ENCODE measurements at regions of chr14 and their contacts with region 1.

Region 1: DNA sequence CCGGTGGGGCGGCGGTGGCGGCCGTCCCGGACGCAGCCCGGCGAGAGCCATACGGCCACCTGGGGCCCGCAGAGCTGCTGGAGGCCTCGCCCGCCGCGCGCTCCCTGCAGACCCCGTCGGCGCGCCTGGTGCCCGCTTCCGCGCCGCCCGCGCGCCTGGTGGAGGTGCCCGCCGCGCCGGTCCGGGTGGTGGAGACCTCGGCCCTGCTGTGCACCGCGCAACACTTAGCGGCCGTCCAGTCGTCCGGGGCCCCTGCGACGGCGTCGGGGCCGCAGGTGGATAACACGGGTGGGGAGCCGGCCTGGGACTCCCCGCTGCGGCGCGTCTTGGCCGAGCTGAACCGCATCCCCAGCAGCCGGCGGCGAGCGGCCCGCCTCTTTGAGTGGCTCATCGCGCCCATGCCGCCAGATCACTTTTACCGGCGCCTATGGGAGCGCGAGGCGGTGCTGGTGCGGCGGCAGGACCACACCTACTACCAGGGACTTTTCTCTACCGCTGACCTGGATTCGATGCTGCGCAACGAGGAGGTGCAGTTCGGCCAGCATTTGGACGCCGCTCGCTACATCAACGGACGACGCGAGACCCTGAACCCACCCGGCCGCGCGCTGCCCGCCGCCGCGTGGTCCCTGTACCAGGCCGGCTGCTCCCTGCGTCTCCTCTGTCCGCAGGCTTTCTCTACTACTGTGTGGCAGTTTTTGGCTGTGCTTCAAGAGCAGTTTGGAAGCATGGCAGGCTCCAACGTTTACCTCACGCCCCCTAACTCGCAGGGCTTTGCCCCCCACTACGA is 716 bp downstream of the RIOX1 start:
- DNase-seq: peak; percentile 69 to 84 (median 74)
- H3K4me3 ChIP-seq: peak overlapping the region; percentile 81 to 96
- H3K4me3 Mint-ChIP-seq: peak overlapping the region; percentile 87 to 94 (median 89)
- H3K27ac ChIP-seq: peak overlapping the region; percentile 83
- H3K27ac Mint-ChIP-seq: peak overlapping the region; percentile 86 to 96 (median 92)
- H3K4me1 ChIP-seq: peaks cover 45% of the 10 kb centered on the region
- H3K4me1 Mint-ChIP-seq: peaks cover 31 to 58% (median 44%) of the 10 kb centered on the region in 4 donors
- H3K27me3 ChIP-seq: no peaks in the 10 kb centered on the region
- H3K27me3 Mint-ChIP-seq: peaks cover 0 to 2% of the 10 kb centered on the region in 2 donors

Region 2: GRCh38 chr14:73463411-73463810 is 28.0 kb before region 1 on chr14:
- CTCF ChIA-PET with region 1: interaction called, 5 read pairs
- POLR2A ChIA-PET with region 1: interaction called, 45 read pairs
- intact Hi-C with region 1: loop called (anchors 1 kb)
- DNase-seq: no peak
- H3K4me3 ChIP-seq: no peak overlapping the region
- H3K4me3 Mint-ChIP-seq: no peak overlapping the region
- H3K27ac ChIP-seq: no peak overlapping the region
- H3K27ac Mint-ChIP-seq: no peak overlapping the region
- H3K4me1 ChIP-seq: peaks cover 36% of the 10 kb centered on the region
- H3K4me1 Mint-ChIP-seq: peaks cover 23 to 50% (median 32%) of the 10 kb centered on the region in 4 donors
- H3K27me3 ChIP-seq: no peaks in the 10 kb centered on the region
- H3K27me3 Mint-ChIP-seq: no peaks in the 10 kb centered on the region

Region 3: GRCh38 chr14:73568381-73568781 is 76.9 kb after region 1 on chr14:
- CTCF ChIA-PET with region 1: interaction called, 10 read pairs
- POLR2A ChIA-PET with region 1: interaction called, 48 read pairs
- intact Hi-C with region 1: loop called (anchors 1 kb)
- DNase-seq: peak in 3 of 5 donors; percentile 3 to 55 (median 6)
- H3K4me3 ChIP-seq: peak overlapping the region; percentile 28 to 63
- H3K4me3 Mint-ChIP-seq: peak overlapping the region; percentile 81 to 96 (median 94)
- H3K27ac ChIP-seq: peak overlapping the region; percentile 72
- H3K27ac Mint-ChIP-seq: peak overlapping the region; percentile 91 to 98 (median 95)
- H3K4me1 ChIP-seq: peaks cover 46% of the 10 kb centered on the region
- H3K4me1 Mint-ChIP-seq: peaks cover 27 to 55% (median 42%) of the 10 kb centered on the region in 4 donors
- H3K27me3 ChIP-seq: no peaks in the 10 kb centered on the region
- H3K27me3 Mint-ChIP-seq: no peaks in the 10 kb centered on the region

Region 4: DNA sequence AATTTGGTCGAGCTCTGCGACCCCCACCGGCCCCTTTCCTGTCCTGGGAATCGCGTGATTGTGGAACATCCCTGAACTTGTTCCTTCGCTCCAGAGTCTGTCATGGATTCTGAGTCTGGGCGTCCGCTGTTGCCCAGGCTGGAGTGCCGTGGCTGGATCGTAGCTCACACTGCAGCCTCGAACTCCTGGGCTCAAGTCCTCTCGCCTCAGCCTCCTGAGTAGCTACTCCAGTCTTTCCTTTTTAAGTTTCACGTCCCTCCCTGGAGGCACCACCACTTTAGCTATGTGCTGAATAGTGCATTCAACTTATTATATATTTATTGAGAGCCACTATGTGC is 121.6 kb after region 1 on chr14:
- CTCF ChIA-PET with region 1: no interaction called
- POLR2A ChIA-PET with region 1: interaction called, 34 read pairs
- intact Hi-C with region 1: no loop called
- DNase-seq: no peak
- H3K4me3 ChIP-seq: peak overlapping the region; percentile 28 to 82
- H3K4me3 Mint-ChIP-seq: peak overlapping the region; percentile 85 to 90 (median 87)
- H3K27ac ChIP-seq: peak overlapping the region; percentile 40
- H3K27ac Mint-ChIP-seq: peak overlapping the region; percentile 46 to 91 (median 75)
- H3K4me1 ChIP-seq: peaks cover 3% of the 10 kb centered on the region
- H3K4me1 Mint-ChIP-seq: peaks cover 0 to 6% (median 3%) of the 10 kb centered on the region in 4 donors
- H3K27me3 ChIP-seq: no peaks in the 10 kb centered on the region
- H3K27me3 Mint-ChIP-seq: no peaks in the 10 kb centered on the region

Region 5: GRCh38 chr14:73675037-73675436 is 183.6 kb after region 1 on chr14:
- CTCF ChIA-PET with region 1: no interaction called
- POLR2A ChIA-PET with region 1: no interaction called
- intact Hi-C with region 1: no loop called
- DNase-seq: no peak
- H3K4me3 ChIP-seq: no peak overlapping the region
- H3K4me3 Mint-ChIP-seq: no peak overlapping the region
- H3K27ac ChIP-seq: no peak overlapping the region
- H3K27ac Mint-ChIP-seq: peak overlapping the region in 2 of 7 donors; percentile 23 to 38
- H3K4me1 ChIP-seq: no peaks in the 10 kb centered on the region
- H3K4me1 Mint-ChIP-seq: no peaks in the 10 kb centered on the region
- H3K27me3 ChIP-seq: no peaks in the 10 kb centered on the region
- H3K27me3 Mint-ChIP-seq: no peaks in the 10 kb centered on the region

Region 6: DNA sequence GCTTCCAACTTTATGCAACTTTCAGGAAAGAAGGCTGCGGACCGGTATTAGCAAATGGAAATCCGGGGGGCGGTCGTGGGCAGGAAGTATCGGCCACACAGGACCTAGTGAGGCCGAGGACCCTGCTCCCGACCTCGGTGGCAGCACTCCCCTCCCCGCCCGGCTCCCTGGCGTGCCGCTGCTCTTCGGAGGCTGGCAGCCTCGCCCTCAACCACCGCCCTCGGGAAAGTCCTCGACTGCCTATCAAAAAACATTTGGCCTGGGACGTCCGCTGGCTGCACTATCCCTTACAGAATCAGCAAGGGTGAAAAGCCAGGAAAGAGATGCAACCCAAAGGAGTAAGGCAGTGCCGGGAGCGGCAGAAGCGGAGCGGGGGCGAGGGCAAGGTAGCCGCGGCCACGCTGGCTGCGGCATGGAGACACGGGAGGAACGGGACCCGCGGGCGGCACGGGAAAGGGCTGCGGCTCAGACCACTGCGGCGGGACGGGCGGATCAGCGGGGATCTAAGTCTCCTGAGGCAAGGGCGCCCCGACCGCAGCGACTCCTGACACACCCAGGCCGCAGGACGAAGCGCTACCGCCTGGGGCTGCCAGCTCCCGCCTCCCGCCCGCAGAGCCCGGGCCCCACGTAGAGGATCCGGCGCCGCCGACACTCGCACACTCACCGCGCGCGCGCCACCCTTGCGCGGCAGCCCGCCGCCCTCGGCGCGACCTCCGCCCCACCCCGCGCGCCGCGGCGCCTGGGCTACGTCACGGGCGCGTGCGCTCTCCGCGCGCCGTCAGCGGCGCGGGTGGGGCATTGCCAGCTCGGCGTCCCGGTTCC is 527.3 kb after region 1 on chr14 and contains the starts of genes BBOF1 and ENTPD5:
- CTCF ChIA-PET with region 1: no interaction called
- POLR2A ChIA-PET with region 1: interaction called, 6 read pairs
- intact Hi-C with region 1: loop called (anchors 2 kb)
- DNase-seq: peak; percentile 88 to 91 (median 91)
- H3K4me3 ChIP-seq: peak within 1 kb of the TSS; percentile 87 to 94
- H3K4me3 Mint-ChIP-seq: peak within 1 kb of the TSS; percentile 93 to 98 (median 94)
- H3K27ac ChIP-seq: peak within 1 kb of the TSS; percentile 92
- H3K27ac Mint-ChIP-seq: peak within 1 kb of the TSS; percentile 94 to 99 (median 99)
- H3K4me1 ChIP-seq: peaks cover 12% of the 10 kb centered on the region
- H3K4me1 Mint-ChIP-seq: peaks cover 6 to 22% (median 11%) of the 10 kb centered on the region in 4 donors
- H3K27me3 ChIP-seq: no peaks in the 10 kb centered on the region
- H3K27me3 Mint-ChIP-seq: no peaks in the 10 kb centered on the region
- total RNA-seq, gene BBOF1: 2.6 TPM
- total RNA-seq, gene ENTPD5: 15.0 to 16.2 TPM

Region 7: DNA sequence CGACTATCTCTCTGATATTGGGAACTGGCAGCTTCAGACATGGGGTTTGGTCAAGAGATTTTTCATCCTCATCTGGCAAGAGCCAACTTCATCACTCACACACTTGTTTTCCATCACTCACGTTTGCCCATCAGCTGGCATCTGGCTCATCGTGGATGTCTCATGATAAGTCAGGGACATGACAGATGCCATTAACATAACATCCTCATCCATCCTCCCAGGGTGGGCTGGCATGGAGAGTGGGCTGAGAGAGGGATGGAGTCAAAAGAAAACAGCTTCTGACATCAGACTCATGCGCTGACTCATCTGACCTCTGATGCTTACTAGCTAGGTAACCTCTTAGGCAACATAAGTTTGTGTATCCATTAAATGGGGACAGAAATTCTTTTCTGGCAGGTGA is 746.0 kb after region 1 on chr14:
- CTCF ChIA-PET with region 1: no interaction called
- POLR2A ChIA-PET with region 1: no interaction called
- intact Hi-C with region 1: no loop called
- DNase-seq: no peak
- H3K4me3 ChIP-seq: no peak overlapping the region
- H3K4me3 Mint-ChIP-seq: no peak overlapping the region
- H3K27ac ChIP-seq: no peak overlapping the region
- H3K27ac Mint-ChIP-seq: no peak overlapping the region
- H3K4me1 ChIP-seq: peaks cover 20% of the 10 kb centered on the region
- H3K4me1 Mint-ChIP-seq: peaks cover 10 to 27% (median 18%) of the 10 kb centered on the region in 4 donors
- H3K27me3 ChIP-seq: peaks cover 37% of the 10 kb centered on the region
- H3K27me3 Mint-ChIP-seq: peaks cover 36 to 49% of the 10 kb centered on the region in 2 donors